ENCODE measurements at regions of chr1 and their contacts with region 1.

Region 1: DNA sequence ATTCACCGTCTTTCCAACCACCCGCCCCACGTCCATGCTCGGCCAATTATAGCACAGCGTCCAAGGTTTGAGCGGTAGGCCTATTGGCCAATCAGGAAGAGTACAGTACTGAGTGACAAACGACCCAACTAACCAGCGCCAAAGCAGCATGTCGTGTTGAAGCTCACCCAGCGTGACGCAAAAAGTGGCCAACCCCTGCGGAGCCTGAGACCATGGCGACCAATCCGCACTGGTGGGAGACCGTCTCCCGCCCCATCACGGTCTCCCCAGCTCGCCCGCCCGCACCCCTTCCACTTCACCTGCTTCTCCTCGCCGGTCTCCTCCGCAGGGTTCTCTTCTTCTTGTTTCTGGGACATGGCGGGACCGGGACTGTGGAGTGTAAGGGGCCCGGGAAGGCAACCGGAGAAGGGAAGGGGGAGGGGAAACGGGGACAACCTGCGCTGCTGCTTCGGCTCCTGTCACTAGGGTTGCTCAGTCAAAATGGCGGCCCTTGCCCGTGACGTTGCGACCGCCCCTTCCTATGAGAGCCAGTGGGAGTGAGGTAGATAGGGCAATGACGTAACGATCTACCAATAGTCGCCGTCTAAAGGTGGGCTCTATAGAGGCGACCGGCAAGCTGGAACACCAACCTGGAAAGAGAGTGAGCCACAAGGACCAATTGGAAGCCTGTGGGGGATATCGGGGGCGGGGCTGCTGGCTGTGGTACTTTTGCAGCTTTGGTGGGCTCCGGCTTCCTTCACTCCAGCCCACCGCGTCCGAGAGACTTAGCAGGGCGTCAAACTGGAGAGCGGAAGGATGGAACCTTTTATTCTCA is at the start of gene ENSA:
- DNase-seq: peak; percentile 100
- ATAC-seq: peak; percentile 94
- H3K4me3 ChIP-seq: peak within 1 kb of the TSS; percentile 79
- H3K27ac ChIP-seq: peak within 1 kb of the TSS; percentile 86
- H3K4me1 ChIP-seq: peaks cover 34% of the 10 kb centered on the region
- H3K27me3 ChIP-seq: no peaks in the 10 kb centered on the region
- CTCF ChIP-seq: no peak
- total RNA-seq, gene ENSA: 194 and 232 TPM in 2 replicates

Region 2: DNA sequence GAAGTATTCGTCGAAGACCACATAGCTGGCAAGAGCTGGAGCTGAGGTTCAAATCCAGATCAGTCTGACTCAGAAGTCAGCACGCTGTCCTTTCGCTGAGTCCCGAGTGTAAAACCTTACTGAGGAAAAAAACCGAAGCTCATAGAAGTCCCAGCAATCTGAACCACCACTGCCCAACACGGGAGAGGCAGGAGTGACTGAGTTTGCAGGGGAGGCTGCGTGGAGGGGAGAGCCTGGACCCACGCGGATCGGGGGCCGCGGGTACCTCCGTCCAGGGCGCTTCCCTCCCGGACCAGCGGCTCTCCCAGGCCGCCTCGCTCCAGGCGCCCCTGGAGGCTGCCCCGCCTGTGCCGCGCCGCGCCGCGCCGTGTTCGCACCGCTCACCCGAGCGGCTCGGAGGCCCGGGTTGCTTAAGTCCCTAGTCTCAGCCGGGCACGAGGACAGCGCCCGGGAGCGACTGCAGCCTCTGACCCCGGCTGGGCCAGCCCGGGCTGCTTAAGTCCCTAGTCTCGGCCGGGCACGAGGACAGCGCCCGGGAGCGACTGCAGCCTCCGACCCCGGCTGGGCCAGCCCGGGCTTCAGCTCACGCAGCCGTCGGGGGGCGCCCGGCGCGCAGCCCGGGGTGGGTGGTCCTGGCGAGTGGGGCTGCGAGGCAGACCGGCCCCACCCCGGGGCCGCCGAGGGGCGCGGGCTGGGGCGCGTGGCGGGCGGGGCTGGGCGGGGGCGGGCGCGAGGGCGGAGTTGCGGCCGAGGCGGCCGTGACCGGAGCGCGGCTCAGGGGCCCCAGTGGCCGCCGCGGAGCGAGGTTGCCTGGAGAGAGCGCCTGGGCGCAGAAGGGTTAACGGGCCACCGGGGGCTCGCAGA is 80.5 kb before region 1 on chr1 and contains the start of gene ADAMTSL4:
- CTCF ChIA-PET with region 1: no interaction called
- POLR2A ChIA-PET with region 1: interaction called, 17 read pairs
- intact Hi-C with region 1: no loop called
- DNase-seq: peak; percentile 65
- ATAC-seq: peak; percentile 77
- H3K4me3 ChIP-seq: peak within 1 kb of the TSS; percentile 72
- H3K27ac ChIP-seq: peak within 1 kb of the TSS; percentile 4; the same call in 1 of the 2 replicates
- H3K4me1 ChIP-seq: peaks cover 20% of the 10 kb centered on the region
- H3K27me3 ChIP-seq: no peaks in the 10 kb centered on the region
- CTCF ChIP-seq: peak; percentile 28; the same call in 1 of the 2 replicates
- total RNA-seq, gene ADAMTSL4: 0.81 and 0.87 TPM in 2 replicates

Region 3: GRCh38 chr1:150661156-150661555 is 31.8 kb after region 1 on chr1:
- CTCF ChIA-PET with region 1: no interaction called
- POLR2A ChIA-PET with region 1: no interaction called
- intact Hi-C with region 1: loop called (anchors 5 kb)
- DNase-seq: no peak
- ATAC-seq: no peak
- H3K4me3 ChIP-seq: no peak overlapping the region
- H3K27ac ChIP-seq: no peak overlapping the region
- H3K4me1 ChIP-seq: no peaks in the 10 kb centered on the region
- H3K27me3 ChIP-seq: no peaks in the 10 kb centered on the region
- CTCF ChIP-seq: no peak

Region 4: GRCh38 chr1:150813058-150813707 is 183.9 kb after region 1 on chr1:
- CTCF ChIA-PET with region 1: interaction called, 5 read pairs
- POLR2A ChIA-PET with region 1: no interaction called
- intact Hi-C with region 1: loop called (anchors 2 kb)
- DNase-seq: peak; percentile 79
- ATAC-seq: peak; percentile 98
- H3K4me3 ChIP-seq: no peak overlapping the region
- H3K27ac ChIP-seq: no peak overlapping the region
- H3K4me1 ChIP-seq: no peaks in the 10 kb centered on the region
- H3K27me3 ChIP-seq: no peaks in the 10 kb centered on the region
- CTCF ChIP-seq: peak; percentile 96

Region 5: DNA sequence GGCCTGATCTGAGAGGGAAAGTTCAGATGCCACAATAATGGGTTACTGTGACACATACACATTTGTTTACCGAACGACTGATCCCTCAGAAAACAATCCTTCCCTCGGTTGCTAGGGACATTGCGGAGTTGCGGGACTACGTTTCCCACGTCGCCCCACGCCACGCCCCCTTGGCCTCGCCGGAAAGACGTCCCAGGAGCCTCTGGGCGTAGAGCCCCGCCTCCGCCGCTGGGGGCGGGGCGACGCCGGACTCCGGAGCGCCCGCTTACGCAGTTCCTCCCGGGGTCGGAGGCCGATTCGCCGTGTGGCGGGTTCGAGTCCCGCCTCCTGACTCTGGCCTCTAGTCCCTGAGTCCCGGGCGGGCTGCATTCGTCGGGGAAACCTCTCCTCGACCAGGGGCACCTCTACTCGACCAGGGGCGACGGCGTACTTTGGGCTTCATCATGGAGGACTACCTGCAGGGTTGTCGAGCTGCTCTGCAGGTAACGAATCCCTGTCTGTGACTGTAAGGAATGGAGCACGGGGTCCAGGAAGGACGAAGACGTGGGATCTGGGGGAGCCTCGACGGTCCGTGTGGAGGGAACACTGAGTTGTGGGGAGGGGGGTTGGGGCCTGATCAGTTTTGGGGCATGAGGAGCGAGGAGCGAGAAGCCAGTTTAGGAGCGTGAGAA is 379.0 kb after region 1 on chr1 and contains the start of gene PRUNE1:
- CTCF ChIA-PET with region 1: no interaction called
- POLR2A ChIA-PET with region 1: no interaction called
- intact Hi-C with region 1: loop called (anchors 10 kb)
- DNase-seq: peak; percentile 100
- ATAC-seq: peak; percentile 83
- H3K4me3 ChIP-seq: peak within 1 kb of the TSS; percentile 86
- H3K27ac ChIP-seq: peak within 1 kb of the TSS; percentile 82
- H3K4me1 ChIP-seq: peaks cover 37% of the 10 kb centered on the region
- H3K27me3 ChIP-seq: no peaks in the 10 kb centered on the region
- CTCF ChIP-seq: no peak
- total RNA-seq, gene PRUNE1: 19.4 and 20.3 TPM in 2 replicates

Measured in PC-3 (cell line).